ENCODE measurements at regions of chr12 and their contacts with region 1.

Region 1: GRCh38 chr12:107317751-107318613 is 224.6 kb upstream of the CRY1 start:
- DNase-seq: peak; percentile 92
- H3K4me3 Mint-ChIP-seq: peak overlapping the region; percentile 85
- H3K27ac Mint-ChIP-seq: no peak overlapping the region
- H3K4me1 Mint-ChIP-seq: peaks cover 24% of the 10 kb centered on the region
- H3K27me3 Mint-ChIP-seq: no peaks in the 10 kb centered on the region

Region 2: DNA sequence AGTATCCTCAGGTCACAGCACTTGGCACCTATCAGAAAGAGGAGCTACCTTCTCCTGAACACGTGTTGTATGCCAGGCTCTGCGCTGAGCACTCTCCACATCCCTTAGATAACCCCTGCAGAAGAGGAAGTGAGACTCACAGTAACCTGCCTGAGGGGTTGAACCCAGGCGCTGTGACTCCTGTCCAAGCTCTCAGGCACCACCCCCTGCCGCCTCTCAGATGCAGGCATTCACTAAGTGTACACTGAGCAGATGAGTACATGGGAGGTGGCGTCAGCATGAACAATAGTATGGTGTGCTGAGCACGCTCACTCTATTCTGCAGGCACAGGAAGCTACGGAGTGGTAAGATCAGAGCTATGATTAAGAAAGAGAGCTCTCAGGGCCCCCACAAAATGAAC is 564.5 kb before region 1 on chr12:
- CTCF ChIA-PET with region 1: no interaction called
- intact Hi-C with region 1: loop called (anchors 5 kb)
- DNase-seq: peak; percentile 90
- H3K4me3 Mint-ChIP-seq: peak overlapping the region; percentile 46
- H3K27ac Mint-ChIP-seq: peak overlapping the region; percentile 68
- H3K4me1 Mint-ChIP-seq: peaks cover 30% of the 10 kb centered on the region
- H3K27me3 Mint-ChIP-seq: no peaks in the 10 kb centered on the region

Region 3: DNA sequence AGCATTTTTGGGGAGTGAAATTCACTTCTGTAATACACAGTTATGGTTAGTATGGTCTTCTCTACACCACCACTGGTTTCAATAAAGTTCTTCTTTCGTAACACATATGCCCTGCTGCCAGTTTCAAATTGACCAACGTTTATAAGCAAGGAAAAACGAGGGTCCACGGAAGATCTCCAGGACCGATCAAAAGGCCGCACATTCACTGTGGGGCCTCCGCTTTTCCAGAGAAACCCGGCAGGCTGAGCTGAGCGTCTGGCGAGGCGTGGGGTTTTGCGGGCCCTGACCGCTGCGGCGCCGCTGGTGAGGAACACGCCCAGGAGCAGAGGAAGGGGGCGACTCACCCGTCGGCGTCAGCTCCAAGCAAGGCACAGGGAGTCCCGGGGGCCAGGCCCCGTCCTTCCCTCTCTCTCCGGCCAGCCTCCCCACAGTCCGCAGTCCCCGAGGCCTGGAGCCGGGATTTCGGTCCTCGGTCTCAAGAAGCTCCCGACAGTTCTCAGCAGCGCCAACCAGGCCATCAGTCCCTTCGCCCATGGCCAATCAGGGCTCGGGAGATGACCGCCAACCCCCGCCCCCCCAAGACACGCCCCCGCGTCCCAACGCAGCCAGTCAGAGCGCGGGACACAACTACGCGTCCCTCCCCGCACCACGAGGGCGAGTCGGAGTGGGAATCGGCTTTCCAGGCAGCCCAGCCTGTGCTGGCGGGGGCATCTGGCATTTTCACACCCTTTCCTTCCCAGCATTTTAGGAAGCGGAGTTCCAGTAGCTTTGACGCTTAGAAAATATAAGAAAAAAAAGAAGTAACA is 331.2 kb before region 1 on chr12 and contains the start of gene MTERF2:
- CTCF ChIA-PET with region 1: no interaction called
- intact Hi-C with region 1: loop called (anchors 10 kb)
- DNase-seq: peak; percentile 88
- H3K4me3 Mint-ChIP-seq: peak within 1 kb of the TSS; percentile 90
- H3K27ac Mint-ChIP-seq: peak within 1 kb of the TSS; percentile 70
- H3K4me1 Mint-ChIP-seq: peaks cover 36% of the 10 kb centered on the region
- H3K27me3 Mint-ChIP-seq: no peaks in the 10 kb centered on the region
- total RNA-seq, gene MTERF2: 5.2 to 6.5 TPM

Region 4: DNA sequence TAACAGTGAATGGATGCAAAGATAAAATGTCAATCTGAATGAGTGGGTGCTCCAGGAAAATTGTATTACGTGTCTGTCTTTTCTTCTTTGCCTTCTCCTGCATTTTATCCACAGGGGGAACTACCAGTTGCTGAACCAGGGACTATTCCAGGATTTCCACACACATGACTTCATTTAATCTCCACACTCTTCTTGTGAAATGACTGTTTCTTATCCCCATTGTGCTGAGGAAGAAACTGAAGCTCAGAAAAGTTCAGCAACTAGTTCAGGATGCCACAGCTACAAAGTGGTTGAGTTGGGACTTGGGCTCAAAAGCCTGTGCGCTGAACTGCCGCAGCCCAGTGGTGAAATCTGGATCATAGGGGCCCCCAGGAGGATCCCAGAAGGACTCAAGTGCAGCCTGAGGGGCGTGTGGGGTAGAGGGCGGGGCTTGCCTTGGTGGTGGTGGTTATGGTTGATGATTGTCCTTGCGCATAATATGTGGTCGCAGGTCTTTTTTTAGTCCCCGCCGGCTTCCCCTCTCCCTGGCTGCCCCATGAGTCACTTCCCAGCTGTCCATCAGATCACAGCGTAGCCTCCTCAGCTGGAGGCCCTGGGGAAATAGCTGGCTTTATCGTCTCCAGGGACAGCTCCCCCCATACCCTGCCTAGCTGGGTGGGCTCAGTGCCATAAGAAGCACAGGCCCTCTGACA is 10.6 kb after region 1 on chr12:
- CTCF ChIA-PET with region 1: interaction called, 9 read pairs
- intact Hi-C with region 1: loop called (anchors 1 kb)
- DNase-seq: peak; percentile 39
- H3K4me3 Mint-ChIP-seq: no peak overlapping the region
- H3K27ac Mint-ChIP-seq: no peak overlapping the region
- H3K4me1 Mint-ChIP-seq: peaks cover 66% of the 10 kb centered on the region
- H3K27me3 Mint-ChIP-seq: no peaks in the 10 kb centered on the region

Region 5: DNA sequence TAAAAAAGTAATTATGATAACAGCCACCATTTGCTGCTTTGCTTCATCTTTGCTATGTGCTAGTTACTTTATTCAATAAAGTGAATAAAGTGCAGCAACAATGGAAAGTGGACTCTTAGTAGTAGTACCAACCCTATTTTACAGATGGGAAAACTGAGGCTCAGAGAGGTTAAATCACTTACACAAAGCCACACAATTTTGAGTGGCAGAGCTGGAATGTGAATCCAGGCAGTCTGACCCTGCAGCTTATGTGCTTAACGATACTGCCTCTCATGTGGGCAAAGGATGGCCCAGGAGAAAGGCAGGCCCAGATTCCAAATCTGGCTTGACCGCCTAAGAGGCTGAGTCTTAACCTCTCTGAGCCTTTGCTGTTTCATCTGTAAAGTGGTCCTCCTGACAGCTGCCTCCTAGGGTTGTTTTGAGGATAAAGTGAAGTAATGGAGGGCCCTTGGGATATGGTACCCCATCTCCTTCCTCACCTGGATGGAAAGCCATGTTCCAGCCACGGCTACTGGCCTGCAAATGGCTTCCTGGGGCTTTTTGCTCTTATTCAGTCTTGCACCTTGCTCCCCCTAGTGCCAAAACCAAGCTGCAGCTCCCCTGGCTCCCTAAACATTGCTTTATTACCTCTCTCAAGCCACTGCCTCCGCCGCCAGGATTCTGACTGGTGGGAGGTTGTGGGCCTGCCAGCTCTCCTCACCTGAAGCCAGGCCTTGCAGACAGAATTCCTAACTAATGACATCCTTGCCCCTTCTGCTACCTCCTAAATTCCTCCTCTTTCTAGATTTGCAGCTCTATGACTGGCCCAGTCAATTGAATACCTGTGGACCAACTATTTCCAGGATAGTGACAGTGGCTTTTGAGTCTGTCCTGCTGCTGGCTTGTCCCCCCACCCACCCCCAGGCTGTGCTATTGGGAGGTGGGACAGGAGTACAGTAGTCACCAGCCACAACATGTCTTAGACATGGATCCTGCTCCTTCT is 84.3 kb after region 1 on chr12:
- CTCF ChIA-PET with region 1: interaction called, 51 read pairs
- intact Hi-C with region 1: loop called (anchors 1 kb)
- DNase-seq: peak; percentile 85
- H3K4me3 Mint-ChIP-seq: no peak overlapping the region
- H3K27ac Mint-ChIP-seq: no peak overlapping the region
- H3K4me1 Mint-ChIP-seq: peaks cover 14% of the 10 kb centered on the region
- H3K27me3 Mint-ChIP-seq: no peaks in the 10 kb centered on the region

Region 6: GRCh38 chr12:107685360-107686248 is 367.6 kb after region 1 on chr12 and contains the start of gene PWP1:
- CTCF ChIA-PET with region 1: no interaction called
- intact Hi-C with region 1: loop called (anchors 1 kb)
- DNase-seq: peak; percentile 95
- H3K4me3 Mint-ChIP-seq: peak within 1 kb of the TSS; percentile 90
- H3K27ac Mint-ChIP-seq: peak within 1 kb of the TSS; percentile 95
- H3K4me1 Mint-ChIP-seq: peaks cover 20% of the 10 kb centered on the region
- H3K27me3 Mint-ChIP-seq: no peaks in the 10 kb centered on the region
- total RNA-seq, gene PWP1: 35.0 to 37.1 TPM

Measured in activated naive CD4-positive, alpha-beta T cell treated with anti-CD3 and anti-CD28 coated beads for 36 hours (primary cell).